ENCODE measurements at regions of chr1 and their contacts with region 1.

Region 1: DNA sequence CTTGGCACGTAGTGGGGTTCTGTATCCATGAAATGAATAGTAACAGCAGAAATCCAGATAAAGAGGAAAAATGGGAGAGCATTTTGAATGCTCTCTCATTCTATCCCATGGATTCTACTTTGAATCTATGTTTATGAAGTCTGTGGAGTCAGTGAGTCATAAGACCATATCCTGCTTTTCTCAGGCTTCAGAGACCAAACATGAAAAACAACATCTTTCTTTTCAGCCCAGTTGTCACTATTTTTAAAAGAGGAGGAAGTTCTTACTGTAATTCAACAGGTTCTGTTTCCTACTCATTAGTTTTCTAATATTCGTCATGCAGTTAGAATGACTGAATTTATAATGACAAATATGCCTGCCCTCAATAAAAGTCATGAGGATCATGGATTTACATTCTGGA is 39.4 kb upstream of the CD55 start:
- DNase-seq: no peak
- H3K4me3 Mint-ChIP-seq: peak overlapping the region; percentile 55
- H3K27ac Mint-ChIP-seq: peak overlapping the region; percentile 84
- H3K4me1 Mint-ChIP-seq: peaks cover 48% of the 10 kb centered on the region
- H3K27me3 Mint-ChIP-seq: peaks cover 1% of the 10 kb centered on the region

Region 2: DNA sequence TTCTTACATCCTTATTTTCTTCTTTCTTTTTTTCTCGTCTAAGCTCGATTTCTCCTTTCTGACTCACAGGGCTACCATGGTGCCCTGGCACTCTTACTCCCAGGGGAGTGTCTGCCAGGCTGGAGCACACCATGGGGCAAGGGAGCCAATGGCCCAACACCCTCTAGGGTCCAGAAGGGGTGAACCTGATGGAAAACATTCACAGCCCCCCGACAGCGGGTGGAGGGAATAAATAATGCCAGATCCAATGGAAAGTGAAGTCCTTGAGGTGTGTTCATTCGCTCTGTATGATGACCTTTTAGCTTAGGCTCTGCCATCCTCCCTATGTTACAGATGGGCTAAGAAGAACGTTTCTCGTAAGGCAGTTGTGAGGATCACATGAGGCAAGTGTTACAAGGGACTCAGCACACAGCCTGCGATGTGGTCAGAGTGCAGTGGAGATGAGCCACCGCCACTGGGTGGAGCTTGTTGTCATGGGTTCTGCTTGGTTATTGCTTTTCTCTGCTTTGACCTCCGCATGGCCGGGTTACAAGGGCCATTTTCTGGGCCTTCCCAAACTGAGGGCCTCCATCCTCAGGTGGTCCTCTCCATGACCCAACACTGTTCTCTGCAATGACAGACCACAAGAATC is 356.8 kb before region 1 on chr1:
- intact Hi-C with region 1: no loop called
- DNase-seq: peak; percentile 85
- H3K4me3 Mint-ChIP-seq: no peak overlapping the region
- H3K27ac Mint-ChIP-seq: no peak overlapping the region
- H3K4me1 Mint-ChIP-seq: peaks cover 24% of the 10 kb centered on the region
- H3K27me3 Mint-ChIP-seq: no peaks in the 10 kb centered on the region

Region 3: GRCh38 chr1:207389740-207390464 is 107.8 kb after region 1 on chr1:
- intact Hi-C with region 1: loop called (anchors 1 kb)
- DNase-seq: no peak
- H3K4me3 Mint-ChIP-seq: no peak overlapping the region
- H3K27ac Mint-ChIP-seq: peak overlapping the region; percentile 82
- H3K4me1 Mint-ChIP-seq: peaks cover 8% of the 10 kb centered on the region
- H3K27me3 Mint-ChIP-seq: no peaks in the 10 kb centered on the region